ENCODE measurements at regions of chr1 and their contacts with region 1.

Region 1: GRCh38 chr1:36650200-36651065 is 167.7 kb upstream of the CSF3R start:
- DNase-seq: peak; percentile 29 to 96
- H3K4me3 ChIP-seq: no peak overlapping the region
- H3K27ac ChIP-seq: no peak overlapping the region
- H3K4me1 ChIP-seq: peaks cover 0 to 3% (median 3%) of the 10 kb centered on the region in 4 experiments; a peak in 3 of 7 replicates
- H3K27me3 ChIP-seq: peaks cover 0 to 2% (median 0%) of the 10 kb centered on the region in 4 experiments; a peak in 2 of 7 replicates
- CTCF ChIP-seq: peak; percentile 85 to 91 (median 85)
- EP300 ChIP-seq: no peak
- POLR2A ChIP-seq: no peak
- RAD21 ChIP-seq: peak; percentile 70 to 77

Region 2: DNA sequence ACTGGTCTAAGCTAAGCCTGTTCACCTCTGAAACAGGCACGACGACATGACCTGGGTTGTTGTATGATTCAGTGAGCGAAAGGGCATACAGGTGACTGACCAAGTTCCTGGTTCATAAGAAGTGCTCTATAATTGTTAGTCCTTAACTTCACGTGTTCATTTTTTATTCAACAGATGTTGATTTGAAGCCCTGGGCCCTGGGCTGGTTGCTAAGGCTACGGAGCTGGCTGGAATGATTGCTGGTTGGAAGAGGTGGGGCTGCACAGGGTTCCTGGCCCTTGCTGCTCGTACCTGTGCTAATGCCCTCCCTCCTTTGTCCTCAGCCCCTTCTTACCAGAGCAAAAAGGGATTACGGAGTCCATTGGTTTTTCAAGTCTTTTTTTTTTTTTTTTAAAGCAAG is 56.4 kb before region 1 on chr1:
- CTCF ChIA-PET with region 1: interaction called, 15 read pairs
- POLR2A ChIA-PET with region 1: no interaction called
- DNase-seq: no peak
- H3K4me3 ChIP-seq: no peak overlapping the region
- H3K27ac ChIP-seq: no peak overlapping the region
- H3K4me1 ChIP-seq: peaks cover 0 to 10% (median 2%) of the 10 kb centered on the region in 4 experiments; a peak in 2 of 7 replicates
- H3K27me3 ChIP-seq: no peaks in the 10 kb centered on the region; a peak in 1 of 7 replicates
- CTCF ChIP-seq: no peak
- EP300 ChIP-seq: no peak
- POLR2A ChIP-seq: no peak
- RAD21 ChIP-seq: no peak

Region 3: DNA sequence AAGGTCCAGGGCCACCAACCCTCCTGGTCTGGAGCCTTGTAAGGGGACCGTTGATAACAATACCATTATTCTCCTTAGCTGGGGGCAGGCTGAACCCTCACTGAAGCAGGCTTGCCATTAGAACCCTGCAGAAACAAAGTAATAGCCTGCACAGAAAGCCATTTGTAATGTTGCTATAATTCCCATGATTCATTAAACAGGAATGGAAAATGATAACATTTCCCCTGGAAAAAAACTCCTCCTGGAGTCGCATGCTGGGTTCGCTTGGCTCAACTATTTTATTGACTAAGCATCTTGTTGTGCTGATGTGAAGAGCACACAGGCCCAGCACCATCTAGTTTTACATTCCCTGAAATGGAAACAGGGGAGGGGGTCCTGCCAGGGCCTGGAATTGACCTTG is 12.2 kb before region 1 on chr1:
- CTCF ChIA-PET with region 1: interaction called, 36 read pairs
- POLR2A ChIA-PET with region 1: no interaction called
- DNase-seq: no peak
- H3K4me3 ChIP-seq: no peak overlapping the region
- H3K27ac ChIP-seq: no peak overlapping the region
- H3K4me1 ChIP-seq: no peaks in the 10 kb centered on the region
- H3K27me3 ChIP-seq: no peaks in the 10 kb centered on the region
- CTCF ChIP-seq: no peak
- EP300 ChIP-seq: no peak
- POLR2A ChIP-seq: no peak
- RAD21 ChIP-seq: no peak

Region 4: DNA sequence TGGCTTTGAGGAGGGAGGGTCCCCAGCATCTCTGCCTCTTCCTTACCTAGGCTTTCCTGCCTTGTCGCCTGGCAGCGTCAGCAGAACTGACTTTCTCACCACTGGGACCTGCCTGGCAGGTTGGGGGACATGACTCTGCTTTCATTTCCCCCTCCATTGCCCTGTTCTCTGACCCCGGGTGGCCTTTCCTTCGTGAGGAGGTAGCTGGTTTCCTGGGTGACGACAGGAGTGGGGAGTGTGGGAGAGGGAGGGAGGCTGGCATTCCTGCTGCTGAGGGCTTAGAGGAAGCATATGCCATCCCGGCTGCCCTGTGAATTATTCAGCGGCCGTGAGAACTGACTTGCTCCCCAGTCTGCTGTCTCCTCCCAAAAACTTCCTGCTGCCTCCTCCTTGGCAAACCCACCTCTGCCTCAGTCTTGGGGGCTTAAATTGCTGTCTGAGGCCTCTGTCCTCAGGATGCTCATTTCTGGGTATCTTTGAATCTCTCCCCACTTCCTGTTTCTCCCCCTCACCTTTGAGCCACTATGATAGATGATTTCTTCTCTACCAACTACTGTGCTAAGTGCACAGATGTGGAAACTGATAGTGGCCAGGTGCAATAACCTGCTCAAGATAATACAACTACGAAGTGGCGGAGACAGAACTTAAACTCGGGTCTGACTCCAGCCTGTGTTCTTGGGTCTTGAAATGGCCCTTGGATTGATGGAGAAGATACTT is 14.3 kb after region 1 on chr1:
- CTCF ChIA-PET with region 1: interaction called, 39 read pairs
- POLR2A ChIA-PET with region 1: no interaction called
- DNase-seq: no peak
- H3K4me3 ChIP-seq: no peak overlapping the region
- H3K27ac ChIP-seq: no peak overlapping the region
- H3K4me1 ChIP-seq: no peaks in the 10 kb centered on the region
- H3K27me3 ChIP-seq: no peaks in the 10 kb centered on the region; a peak in 1 of 7 replicates
- CTCF ChIP-seq: no peak
- EP300 ChIP-seq: no peak
- POLR2A ChIP-seq: no peak
- RAD21 ChIP-seq: no peak

Region 5: GRCh38 chr1:36673202-36673601 is 22.8 kb after region 1 on chr1:
- CTCF ChIA-PET with region 1: interaction called, 36 read pairs
- POLR2A ChIA-PET with region 1: no interaction called
- DNase-seq: peak in 1 of 2 experiments; percentile 9
- H3K4me3 ChIP-seq: no peak overlapping the region
- H3K27ac ChIP-seq: no peak overlapping the region
- H3K4me1 ChIP-seq: peaks cover 3 to 7% (median 5%) of the 10 kb centered on the region in 4 experiments; a peak in 5 of 7 replicates
- H3K27me3 ChIP-seq: peaks cover 0 to 1% (median 0%) of the 10 kb centered on the region in 4 experiments; a peak in 3 of 7 replicates
- CTCF ChIP-seq: no peak
- EP300 ChIP-seq: no peak
- POLR2A ChIP-seq: no peak
- RAD21 ChIP-seq: no peak

Measured in H1 (cell line).